Left ventricle myocardium superior (tissue), 1 donor: ENCODE measurements at regions of chr1 and their contacts with region 1.

Region 1: DNA sequence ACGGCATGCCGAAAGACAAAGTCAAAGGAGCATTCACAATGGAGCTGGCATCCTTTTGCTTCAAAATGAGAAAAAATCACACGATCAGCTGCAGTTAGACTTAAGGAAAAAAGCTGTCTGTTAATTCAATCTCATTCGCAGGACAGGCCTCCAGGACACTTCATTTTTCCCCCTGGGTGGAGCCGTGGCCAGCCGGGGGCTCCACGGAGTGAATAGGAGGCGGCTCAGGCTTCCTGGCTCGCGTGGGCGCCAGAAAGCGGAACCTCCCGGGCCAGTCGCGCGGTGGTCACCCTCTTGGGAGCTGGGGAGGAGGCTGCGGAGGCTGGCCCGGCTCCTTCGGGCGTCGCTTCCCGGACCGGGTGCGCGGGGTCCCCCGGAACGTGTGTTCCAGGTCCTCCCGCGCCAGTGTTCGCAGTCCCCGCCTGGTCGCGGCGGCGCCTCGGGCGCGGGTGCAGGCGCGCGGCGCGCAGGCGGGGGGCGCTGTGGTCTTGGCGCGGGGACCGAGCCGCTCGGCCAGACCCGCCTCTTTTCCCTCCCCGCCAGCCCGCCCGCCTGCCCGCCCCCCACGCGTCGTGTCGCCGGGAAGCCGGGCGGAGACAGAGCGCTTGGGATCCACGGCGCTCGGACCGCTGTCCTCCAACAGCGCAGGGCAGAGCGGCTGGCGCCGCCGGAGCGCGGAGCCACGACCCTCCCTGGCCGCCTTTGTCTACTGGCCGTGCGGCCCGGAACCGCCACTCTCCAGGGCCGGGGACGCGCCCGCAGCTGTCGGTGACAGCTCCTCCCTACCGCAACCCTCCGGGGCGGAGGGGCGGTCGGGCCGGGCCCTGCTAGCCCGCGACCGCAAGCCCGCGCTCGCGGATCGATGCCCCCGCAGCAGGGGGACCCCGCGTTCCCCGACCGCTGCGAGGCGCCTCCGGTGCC is at the start of gene RHOU:
- DNase-seq: peak; percentile 89
- ATAC-seq: peak; percentile 95
- total RNA-seq, gene RHOU: 4.4 TPM

Region 2: GRCh38 chr1:228850141-228851100 is 115.3 kb after region 1 on chr1:
- intact Hi-C with region 1: no loop called
- DNase-seq: no peak
- ATAC-seq: no peak

Region 3: GRCh38 chr1:228884615-228885566 is 149.8 kb after region 1 on chr1:
- intact Hi-C with region 1: no loop called
- DNase-seq: no peak
- ATAC-seq: no peak

Region 4: GRCh38 chr1:229227298-229227919 is 492.3 kb after region 1 on chr1:
- intact Hi-C with region 1: loop called (anchors 5 kb)
- DNase-seq: peak; percentile 87
- ATAC-seq: peak; percentile 24